Panc1 (cell line): ENCODE measurements at regions of chr3 and their contacts with region 1.

Region 1: DNA sequence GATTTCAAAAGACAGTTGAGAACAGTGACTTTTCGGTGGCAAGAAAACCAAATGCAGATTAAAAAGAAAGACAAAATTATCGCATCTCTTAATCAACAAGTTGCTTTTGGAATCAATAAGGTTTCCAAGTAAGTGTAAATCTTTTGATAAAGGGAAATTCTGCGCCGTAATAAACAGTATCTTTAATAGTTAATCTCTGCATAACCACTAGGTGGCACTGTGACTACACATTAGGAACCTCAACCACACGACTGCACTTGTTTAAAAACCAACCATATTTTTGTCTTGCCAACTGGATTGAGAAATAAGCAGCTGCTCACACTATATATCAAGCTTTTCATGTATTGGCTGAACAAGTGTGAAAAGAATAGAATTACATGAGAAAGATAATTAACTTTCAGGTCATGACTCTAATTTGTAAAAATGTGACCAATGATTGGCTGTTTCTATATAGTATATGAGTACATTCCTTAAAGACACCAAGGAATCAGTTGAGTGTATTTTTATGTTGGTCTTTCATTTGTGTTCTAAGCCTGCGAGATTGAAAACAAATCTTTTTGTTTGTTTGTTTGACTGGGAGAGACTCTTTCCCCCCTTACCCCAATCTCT is 72.7 kb downstream of the DZIP3 start:
- DNase-seq: peak; percentile 32
- ATAC-seq: peak; percentile 88
- H3K4me3 ChIP-seq: no peak overlapping the region
- H3K27ac ChIP-seq: no peak overlapping the region
- H3K4me1 ChIP-seq: no peaks in the 10 kb centered on the region
- H3K27me3 ChIP-seq: no peaks in the 10 kb centered on the region
- CTCF ChIP-seq: peak; percentile 77; the same call in 1 of the 2 replicates

Region 2: DNA sequence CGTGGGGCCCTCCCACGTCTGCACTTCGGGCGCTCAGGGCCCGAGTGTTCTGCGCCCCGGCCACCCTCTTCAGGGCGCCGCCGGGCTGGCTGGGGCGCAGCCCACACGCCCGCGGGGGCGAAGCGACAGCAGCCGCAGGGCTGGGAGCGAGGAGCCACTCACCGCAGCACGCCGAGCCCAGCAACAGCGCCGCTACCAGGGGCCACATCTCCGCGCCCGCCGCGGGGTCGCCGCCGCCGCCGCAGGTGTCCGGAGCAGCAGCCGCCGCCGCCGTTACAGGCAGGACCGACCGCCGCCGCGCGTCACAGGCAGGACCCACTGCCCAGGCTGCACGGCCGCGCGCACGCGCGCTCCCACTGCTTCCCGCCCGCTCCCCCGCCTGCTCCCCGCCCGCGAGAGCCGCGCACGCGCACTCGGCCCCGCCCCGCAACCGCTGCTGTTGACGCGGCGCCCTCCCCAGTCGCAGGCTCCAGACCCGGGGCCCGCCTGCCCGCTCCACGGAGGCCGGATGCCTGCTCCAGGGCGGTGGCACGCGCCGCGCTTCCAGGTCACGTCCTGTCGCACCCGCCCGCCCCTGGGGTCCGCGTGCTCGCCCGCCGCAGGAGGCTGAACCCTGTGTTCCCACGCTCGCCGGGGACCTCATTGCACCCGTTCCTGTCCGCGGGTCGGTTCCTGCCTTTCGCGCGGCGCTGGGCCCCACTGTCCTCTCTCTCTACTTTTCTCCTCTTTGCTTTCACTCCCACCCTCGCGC is 571.4 kb before region 1 on chr3 and contains the start of gene CD47:
- CTCF ChIA-PET with region 1: no interaction called
- POLR2A ChIA-PET with region 1: no interaction called
- in situ Hi-C with region 1: no loop called
- intact Hi-C with region 1: no loop called
- DNase-seq: peak; percentile 25
- ATAC-seq: peak; percentile 93
- H3K4me3 ChIP-seq: peak within 1 kb of the TSS; percentile 90 to 92
- H3K27ac ChIP-seq: peak within 1 kb of the TSS; percentile 88
- H3K4me1 ChIP-seq: peaks cover 19% of the 10 kb centered on the region; the same call in 1 of the 2 replicates
- H3K27me3 ChIP-seq: no peaks in the 10 kb centered on the region
- CTCF ChIP-seq: no peak
- total RNA-seq, gene CD47: 89.7 TPM

Region 3: GRCh38 chr3:108818404-108818803 is 156.2 kb after region 1 on chr3:
- CTCF ChIA-PET with region 1: no interaction called
- POLR2A ChIA-PET with region 1: no interaction called
- in situ Hi-C with region 1: no loop called
- intact Hi-C with region 1: loop called (anchors 1 kb)
- DNase-seq: no peak
- ATAC-seq: peak; percentile 80
- H3K4me3 ChIP-seq: no peak overlapping the region
- H3K27ac ChIP-seq: no peak overlapping the region
- H3K4me1 ChIP-seq: no peaks in the 10 kb centered on the region
- H3K27me3 ChIP-seq: no peaks in the 10 kb centered on the region
- CTCF ChIP-seq: peak; percentile 71

Region 4: GRCh38 chr3:108914774-108915641 is 252.8 kb after region 1 on chr3:
- CTCF ChIA-PET with region 1: interaction called, 3 read pairs
- POLR2A ChIA-PET with region 1: no interaction called
- in situ Hi-C with region 1: no loop called
- intact Hi-C with region 1: loop called (anchors 1 kb)
- DNase-seq: peak; percentile 55
- ATAC-seq: peak; percentile 95
- H3K4me3 ChIP-seq: no peak overlapping the region
- H3K27ac ChIP-seq: no peak overlapping the region
- H3K4me1 ChIP-seq: no peaks in the 10 kb centered on the region
- H3K27me3 ChIP-seq: peaks cover 33% of the 10 kb centered on the region
- CTCF ChIP-seq: peak; percentile 91

Region 5: GRCh38 chr3:109081746-109082510 is 419.7 kb after region 1 on chr3:
- CTCF ChIA-PET with region 1: no interaction called
- POLR2A ChIA-PET with region 1: no interaction called
- in situ Hi-C with region 1: no loop called
- intact Hi-C with region 1: loop called (anchors 5 kb)
- DNase-seq: peak; percentile 38
- ATAC-seq: peak; percentile 90
- H3K4me3 ChIP-seq: no peak overlapping the region
- H3K27ac ChIP-seq: no peak overlapping the region
- H3K4me1 ChIP-seq: no peaks in the 10 kb centered on the region
- H3K27me3 ChIP-seq: no peaks in the 10 kb centered on the region
- CTCF ChIP-seq: peak; percentile 92

Region 6: DNA sequence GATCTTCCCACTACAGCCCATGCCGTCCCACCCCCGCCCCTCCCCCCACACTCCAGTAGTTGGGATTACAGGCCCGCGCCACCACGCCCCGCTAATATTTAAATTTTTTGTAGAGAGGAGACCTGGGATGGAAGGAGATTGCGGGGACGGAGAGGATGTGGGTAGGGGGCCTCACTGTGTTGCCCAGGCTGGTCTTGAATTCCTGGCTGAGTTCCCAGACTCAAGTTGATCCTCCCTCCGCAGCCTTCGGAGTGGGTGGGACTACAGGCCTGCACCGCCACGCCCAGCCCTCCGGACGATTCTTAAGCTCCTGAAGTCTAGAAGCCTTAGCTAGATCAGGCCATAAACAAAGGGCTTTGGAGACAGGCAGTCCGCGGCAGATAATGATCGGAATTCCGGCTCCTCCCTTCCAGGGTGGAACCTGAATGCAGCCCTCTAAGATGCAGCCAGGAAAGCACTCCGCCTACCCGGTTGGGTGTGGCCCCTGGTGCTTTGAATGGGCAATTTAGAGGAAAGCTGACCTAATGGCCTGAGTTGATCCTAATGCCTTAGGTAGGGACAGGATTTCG is 654.0 kb after region 1 on chr3 and contains the start of gene DPPA2:
- CTCF ChIA-PET with region 1: no interaction called
- POLR2A ChIA-PET with region 1: no interaction called
- in situ Hi-C with region 1: no loop called
- intact Hi-C with region 1: no loop called
- DNase-seq: no peak
- ATAC-seq: no peak
- H3K4me3 ChIP-seq: no peak within 1 kb of the TSS
- H3K27ac ChIP-seq: no peak within 1 kb of the TSS
- H3K4me1 ChIP-seq: no peaks in the 10 kb centered on the region
- H3K27me3 ChIP-seq: no peaks in the 10 kb centered on the region
- CTCF ChIP-seq: no peak
- total RNA-seq, gene DPPA2: not detected